ENCODE measurements at regions of chr1 and their contacts with region 1.

Region 1: DNA sequence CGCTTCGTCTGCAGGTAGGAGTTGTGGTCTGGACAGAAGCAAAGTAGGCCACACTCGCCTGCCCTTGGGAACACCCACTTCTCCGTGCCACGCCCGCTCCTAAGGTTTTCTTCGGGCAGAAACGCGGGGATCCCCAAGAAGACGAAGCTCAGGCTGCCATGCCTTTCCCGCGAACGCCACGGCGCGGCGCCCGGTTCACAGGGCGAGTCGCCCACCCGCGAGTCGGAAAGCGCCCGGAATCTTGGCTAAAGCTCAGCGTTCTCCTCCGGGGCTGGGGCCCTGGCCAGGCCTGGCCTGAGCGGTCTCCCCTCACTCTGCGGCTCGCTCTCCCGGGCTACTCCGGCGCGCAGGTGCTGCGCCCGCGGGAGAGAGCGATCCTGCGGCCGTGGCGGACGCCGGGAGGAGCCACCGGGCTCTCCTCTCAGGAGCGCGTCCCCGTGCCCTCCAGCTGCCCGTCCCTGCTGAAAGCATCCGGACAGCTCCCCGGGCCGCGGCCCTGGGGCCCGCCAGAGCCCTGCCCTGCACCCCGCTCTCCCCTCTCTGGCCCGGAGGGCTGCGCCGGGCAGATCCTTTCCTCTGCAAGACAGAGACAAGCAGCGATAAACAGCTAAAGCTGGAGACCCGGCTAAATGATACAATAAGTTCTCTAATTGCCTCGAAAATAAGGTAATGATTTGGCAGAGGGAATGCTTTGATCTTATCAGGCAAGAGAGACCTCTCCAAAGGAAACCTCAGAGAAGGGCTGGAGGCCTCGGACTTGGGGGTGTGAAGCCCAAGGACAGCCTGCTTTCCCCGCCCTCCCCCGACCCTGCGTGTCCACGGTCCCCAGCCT is 6.7 kb upstream of the WNT2B start:
- H3K4me3 Mint-ChIP-seq: peak overlapping the region; percentile 58
- H3K27ac Mint-ChIP-seq: no peak overlapping the region
- H3K4me1 Mint-ChIP-seq: peaks cover 5% of the 10 kb centered on the region
- H3K27me3 Mint-ChIP-seq: peaks cover 75% of the 10 kb centered on the region

Region 2: GRCh38 chr1:112464501-112464900 is 37.5 kb before region 1 on chr1:
- intact Hi-C with region 1: no loop called
- H3K4me3 Mint-ChIP-seq: no peak overlapping the region
- H3K27ac Mint-ChIP-seq: peak overlapping the region; percentile 71
- H3K4me1 Mint-ChIP-seq: peaks cover 58% of the 10 kb centered on the region
- H3K27me3 Mint-ChIP-seq: no peaks in the 10 kb centered on the region

Region 3: GRCh38 chr1:112619520-112620376 is 117.7 kb after region 1 on chr1 and contains the start of gene CAPZA1:
- intact Hi-C with region 1: loop called (anchors 10 kb)
- H3K4me3 Mint-ChIP-seq: peak within 1 kb of the TSS; percentile 97
- H3K27ac Mint-ChIP-seq: peak within 1 kb of the TSS; percentile 99
- H3K4me1 Mint-ChIP-seq: peaks cover 29% of the 10 kb centered on the region
- H3K27me3 Mint-ChIP-seq: no peaks in the 10 kb centered on the region

Region 4: DNA sequence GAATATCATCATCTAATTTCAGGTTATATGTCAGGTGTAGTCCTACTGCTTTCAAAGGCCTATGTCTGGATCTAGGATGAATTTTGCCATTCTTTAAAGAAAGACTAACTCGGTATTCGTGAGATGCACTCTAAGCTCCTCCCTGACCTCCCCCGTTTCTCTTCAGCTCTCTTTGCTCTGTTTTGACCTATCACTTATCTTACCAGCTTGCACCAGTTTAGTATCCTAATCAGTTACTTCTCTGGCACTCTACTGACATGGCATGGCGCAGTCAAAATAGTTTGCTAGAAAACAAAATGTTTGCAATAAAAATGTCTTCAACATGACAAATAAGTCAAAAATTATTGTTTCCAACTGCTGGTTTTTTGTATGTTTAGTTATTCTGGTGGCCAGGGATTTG is 462.3 kb after region 1 on chr1:
- intact Hi-C with region 1: no loop called
- H3K4me3 Mint-ChIP-seq: no peak overlapping the region
- H3K27ac Mint-ChIP-seq: no peak overlapping the region
- H3K4me1 Mint-ChIP-seq: peaks cover 13% of the 10 kb centered on the region
- H3K27me3 Mint-ChIP-seq: no peaks in the 10 kb centered on the region

Measured in dendritic cell treated with granulocyte-macrophage colony-stimulating factor and Interleukin-4, amounts not matched to agents 40 ng/mL and 50 ng/mL, for 4 days (primary cell).